MCF 10A (cell line): ENCODE measurements at regions of chr11 and their contacts with region 1.

Region 1: GRCh38 chr11:14907411-14908213 is 15.6 kb upstream of the CYP2R1 start:
- DNase-seq: peak; percentile 70
- H3K4me3 Mint-ChIP-seq: peak overlapping the region; percentile 43
- H3K27ac Mint-ChIP-seq: no peak overlapping the region
- H3K4me1 Mint-ChIP-seq: peaks cover 16% of the 10 kb centered on the region
- H3K27me3 Mint-ChIP-seq: peaks cover 22% of the 10 kb centered on the region
- CTCF ChIP-seq: peak; percentile 90

Region 2: DNA sequence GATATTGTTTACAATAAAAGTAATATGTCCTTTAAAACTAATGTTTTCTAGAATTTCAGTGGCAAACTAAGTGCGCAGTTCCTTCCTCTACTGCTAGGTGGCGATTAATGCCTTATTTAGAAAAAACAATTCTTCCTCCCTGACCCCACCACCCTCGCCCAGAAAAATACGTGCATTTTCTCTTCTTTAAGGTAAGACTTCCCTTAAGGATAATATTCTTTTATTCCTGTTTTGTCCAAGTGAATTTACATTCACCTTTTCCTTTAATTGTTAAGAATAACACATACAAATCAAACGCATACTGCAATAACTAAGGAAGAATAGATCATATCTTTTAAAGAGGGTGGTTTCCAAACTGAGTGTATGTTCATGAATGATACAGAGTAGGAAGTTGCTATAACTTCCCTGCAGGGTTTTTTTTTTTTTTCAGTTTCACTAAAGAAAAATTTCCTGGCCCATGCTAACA is 370.4 kb before region 1 on chr11:
- CTCF ChIA-PET with region 1: interaction called, 32 read pairs
- POLR2A ChIA-PET with region 1: no interaction called
- intact Hi-C with region 1: loop called (anchors 1 kb)
- DNase-seq: peak; percentile 35
- H3K4me3 Mint-ChIP-seq: no peak overlapping the region
- H3K27ac Mint-ChIP-seq: no peak overlapping the region
- H3K4me1 Mint-ChIP-seq: no peaks in the 10 kb centered on the region
- H3K27me3 Mint-ChIP-seq: no peaks in the 10 kb centered on the region
- CTCF ChIP-seq: peak; percentile 62

Region 3: GRCh38 chr11:14842002-14842401 is 65.6 kb before region 1 on chr11:
- CTCF ChIA-PET with region 1: no interaction called
- POLR2A ChIA-PET with region 1: no interaction called
- intact Hi-C with region 1: no loop called
- DNase-seq: no peak
- H3K4me3 Mint-ChIP-seq: no peak overlapping the region
- H3K27ac Mint-ChIP-seq: no peak overlapping the region
- H3K4me1 Mint-ChIP-seq: no peaks in the 10 kb centered on the region
- H3K27me3 Mint-ChIP-seq: no peaks in the 10 kb centered on the region
- CTCF ChIP-seq: no peak

Region 4: DNA sequence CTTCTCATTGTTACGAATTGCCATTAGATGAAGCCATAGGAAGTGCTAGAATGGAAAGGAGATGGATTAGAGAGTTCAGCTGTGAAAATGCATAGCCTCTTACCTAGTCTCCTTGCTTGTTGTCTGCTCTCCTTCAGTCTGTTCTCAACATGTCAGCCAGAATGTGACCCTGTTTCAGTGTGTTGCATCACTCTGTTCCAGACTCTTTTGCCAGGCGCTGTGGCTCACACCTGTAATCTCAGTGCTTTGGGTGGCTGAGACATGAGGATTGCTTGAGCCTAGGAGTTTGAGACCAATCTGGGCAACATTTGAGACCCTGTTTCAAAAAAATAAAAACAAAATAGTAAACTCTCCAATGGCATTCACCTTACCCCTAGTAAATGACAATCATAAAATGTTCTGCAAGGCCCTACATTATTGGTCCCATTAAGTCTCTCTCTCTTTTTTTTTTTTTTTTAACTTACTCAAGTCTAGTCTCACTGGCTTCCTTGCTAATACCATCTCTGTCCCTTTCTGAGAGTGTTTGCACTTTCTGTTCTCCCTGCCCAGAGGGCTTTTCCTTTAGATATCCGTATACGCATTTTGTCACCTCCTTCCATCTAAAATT is 54.9 kb before region 1 on chr11:
- CTCF ChIA-PET with region 1: interaction called, 13 read pairs
- POLR2A ChIA-PET with region 1: no interaction called
- intact Hi-C with region 1: no loop called
- DNase-seq: no peak
- H3K4me3 Mint-ChIP-seq: no peak overlapping the region
- H3K27ac Mint-ChIP-seq: no peak overlapping the region
- H3K4me1 Mint-ChIP-seq: peaks cover 10% of the 10 kb centered on the region
- H3K27me3 Mint-ChIP-seq: peaks cover 19% of the 10 kb centered on the region
- CTCF ChIP-seq: no peak

Region 5: GRCh38 chr11:14942745-14943144 is 35.1 kb after region 1 on chr11:
- CTCF ChIA-PET with region 1: interaction called, 14 read pairs
- POLR2A ChIA-PET with region 1: no interaction called
- intact Hi-C with region 1: no loop called
- DNase-seq: no peak
- H3K4me3 Mint-ChIP-seq: no peak overlapping the region
- H3K27ac Mint-ChIP-seq: no peak overlapping the region
- H3K4me1 Mint-ChIP-seq: no peaks in the 10 kb centered on the region
- H3K27me3 Mint-ChIP-seq: no peaks in the 10 kb centered on the region
- CTCF ChIP-seq: no peak

Region 6: DNA sequence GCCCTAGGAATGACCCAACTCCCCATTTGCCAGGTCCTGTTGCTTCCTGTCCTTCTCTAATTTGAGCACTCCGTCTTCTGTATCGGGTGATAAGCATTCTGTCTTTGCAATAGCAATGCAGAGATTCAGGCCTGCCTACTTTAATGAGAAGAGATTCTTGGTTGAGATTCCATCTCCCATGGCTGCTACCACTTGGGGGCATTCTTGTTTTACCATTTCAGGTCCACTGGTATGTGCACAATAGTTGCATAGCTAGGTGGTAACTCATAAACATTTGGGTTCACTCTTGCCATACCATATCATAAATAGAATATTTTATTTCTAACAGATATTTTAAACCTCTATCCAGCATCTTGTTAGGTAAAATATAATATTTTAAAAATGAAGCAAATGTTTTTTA is 131.4 kb after region 1 on chr11:
- CTCF ChIA-PET with region 1: interaction called, 16 read pairs
- POLR2A ChIA-PET with region 1: no interaction called
- intact Hi-C with region 1: loop called (anchors 1 kb)
- DNase-seq: peak; percentile 67
- H3K4me3 Mint-ChIP-seq: no peak overlapping the region
- H3K27ac Mint-ChIP-seq: no peak overlapping the region
- H3K4me1 Mint-ChIP-seq: no peaks in the 10 kb centered on the region
- H3K27me3 Mint-ChIP-seq: no peaks in the 10 kb centered on the region
- CTCF ChIP-seq: peak; percentile 64

Region 7: GRCh38 chr11:15091625-15092024 is 184.0 kb after region 1 on chr11:
- CTCF ChIA-PET with region 1: interaction called, 17 read pairs
- POLR2A ChIA-PET with region 1: interaction called, 4 read pairs
- intact Hi-C with region 1: no loop called
- DNase-seq: no peak
- H3K4me3 Mint-ChIP-seq: no peak overlapping the region
- H3K27ac Mint-ChIP-seq: no peak overlapping the region
- H3K4me1 Mint-ChIP-seq: peaks cover 12% of the 10 kb centered on the region
- H3K27me3 Mint-ChIP-seq: no peaks in the 10 kb centered on the region
- CTCF ChIP-seq: no peak

Region 8: DNA sequence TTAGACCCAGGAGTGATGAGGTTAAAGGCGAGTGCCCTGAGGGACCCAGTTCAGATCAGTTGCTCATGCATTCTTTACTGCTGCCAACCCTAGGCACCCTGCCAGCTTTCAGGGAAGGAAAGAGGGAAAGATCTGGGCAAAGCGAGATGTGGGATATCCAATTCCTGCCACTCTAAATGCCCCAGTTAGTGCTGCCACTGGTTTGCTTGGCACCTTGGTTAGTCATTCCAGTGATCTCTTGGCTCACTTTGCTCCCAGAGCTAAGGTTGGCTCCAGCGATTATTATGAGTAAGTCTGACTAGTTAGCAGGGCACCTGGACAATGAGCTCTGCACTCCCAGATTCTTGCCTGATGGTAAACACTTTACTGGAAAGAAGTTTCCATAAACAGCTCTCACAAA is 292.1 kb after region 1 on chr11:
- CTCF ChIA-PET with region 1: interaction called, 14 read pairs
- POLR2A ChIA-PET with region 1: interaction called, 5 read pairs
- intact Hi-C with region 1: no loop called
- DNase-seq: peak; percentile 94
- H3K4me3 Mint-ChIP-seq: no peak overlapping the region
- H3K27ac Mint-ChIP-seq: no peak overlapping the region
- H3K4me1 Mint-ChIP-seq: peaks cover 17% of the 10 kb centered on the region
- H3K27me3 Mint-ChIP-seq: no peaks in the 10 kb centered on the region
- CTCF ChIP-seq: no peak